ENCODE measurements at regions of chr2 and their contacts with region 1.

Region 1: GRCh38 chr2:64488050-64488974 is 34.4 kb downstream of the LGALSL start:
- DNase-seq: peak; percentile 84
- ATAC-seq: peak; percentile 87
- H3K4me3 Mint-ChIP-seq: no peak overlapping the region
- H3K27ac Mint-ChIP-seq: no peak overlapping the region
- H3K4me1 Mint-ChIP-seq: peaks cover 21% of the 10 kb centered on the region
- H3K27me3 Mint-ChIP-seq: peaks cover 30% of the 10 kb centered on the region

Region 2: GRCh38 chr2:64052468-64053241 is 435.7 kb before region 1 on chr2:
- CTCF ChIA-PET with region 1: interaction called, 34 read pairs
- DNase-seq: no peak
- ATAC-seq: no peak
- H3K4me3 Mint-ChIP-seq: no peak overlapping the region
- H3K27ac Mint-ChIP-seq: no peak overlapping the region
- H3K4me1 Mint-ChIP-seq: peaks cover 43% of the 10 kb centered on the region
- H3K27me3 Mint-ChIP-seq: peaks cover 3% of the 10 kb centered on the region

Region 3: DNA sequence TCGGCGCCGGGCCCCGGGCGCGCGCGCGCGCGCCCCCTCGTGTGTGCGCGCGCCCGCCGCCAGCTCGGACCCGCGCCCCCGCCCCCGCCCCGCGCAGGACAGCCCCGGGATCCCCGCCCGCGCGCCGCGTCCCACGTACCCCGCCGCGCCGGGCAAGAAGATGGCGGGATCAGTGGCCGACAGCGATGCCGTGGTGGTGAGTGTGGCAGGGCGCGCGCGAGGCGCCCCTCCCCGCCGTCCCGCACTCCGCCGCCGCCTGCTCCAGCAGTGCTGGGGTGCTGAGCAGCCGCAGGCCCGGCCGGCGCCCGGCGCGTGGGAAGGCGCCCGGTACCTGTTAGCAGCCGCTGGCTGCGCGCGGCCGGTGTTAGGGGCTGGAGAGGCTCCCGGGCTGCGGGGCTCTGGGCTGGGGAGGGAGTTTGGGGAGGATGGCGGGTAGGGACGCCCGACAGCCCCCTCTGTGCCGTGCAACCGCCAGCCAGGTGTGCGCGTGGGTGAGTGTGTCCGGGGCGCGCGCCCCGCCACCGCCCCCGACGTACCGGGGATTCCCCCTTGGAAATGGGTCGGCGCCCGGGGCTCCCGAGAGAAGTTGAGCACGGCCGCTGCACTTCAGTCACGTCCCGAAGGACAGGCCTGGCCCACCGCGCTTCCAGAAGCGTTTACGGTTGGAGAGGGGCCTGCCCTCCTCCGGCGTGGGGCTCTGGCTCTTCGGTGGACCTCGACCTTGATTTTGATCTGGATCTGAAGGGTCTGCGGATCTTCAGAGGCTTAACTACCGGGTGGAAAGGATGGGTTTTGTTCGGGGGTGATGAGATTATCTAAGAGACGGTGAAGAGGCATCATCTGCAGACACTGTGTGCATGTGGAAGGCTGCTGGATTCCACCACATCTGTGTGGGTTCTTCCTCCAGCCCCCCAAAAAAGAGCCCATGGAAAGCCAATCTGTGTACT is 33.7 kb before region 1 on chr2:
- CTCF ChIA-PET with region 1: interaction called, 15 read pairs
- DNase-seq: peak; percentile 46
- ATAC-seq: peak; percentile 74
- H3K4me3 Mint-ChIP-seq: peak overlapping the region; percentile 74
- H3K27ac Mint-ChIP-seq: no peak overlapping the region
- H3K4me1 Mint-ChIP-seq: peaks cover 11% of the 10 kb centered on the region
- H3K27me3 Mint-ChIP-seq: peaks cover 47% of the 10 kb centered on the region

Region 4: DNA sequence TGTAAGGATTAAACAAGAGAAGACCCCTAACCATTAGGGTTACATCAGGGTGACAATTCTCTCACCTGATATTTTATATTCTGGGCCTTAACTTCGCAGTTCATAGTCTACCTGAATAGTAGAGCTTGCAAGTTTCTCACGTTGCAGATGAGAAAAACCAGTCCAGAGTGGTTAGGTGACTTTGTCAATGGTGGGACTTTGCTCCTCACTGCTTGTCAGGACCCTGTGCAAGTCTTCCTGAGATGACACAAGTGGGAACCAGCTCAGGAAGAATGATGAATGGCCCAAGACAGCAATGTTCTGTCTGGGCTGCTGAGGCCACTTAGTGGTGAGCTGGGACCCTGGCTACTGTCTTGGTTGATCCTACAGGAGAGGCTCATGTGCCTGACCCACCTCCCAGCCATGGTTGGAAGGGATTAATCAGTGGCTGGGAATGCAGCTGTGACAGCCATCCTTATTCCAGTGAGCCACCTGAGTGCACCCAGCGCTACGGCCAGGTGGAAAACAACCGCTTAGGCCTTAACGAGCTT is 17.5 kb before region 1 on chr2:
- CTCF ChIA-PET with region 1: interaction called, 43 read pairs
- DNase-seq: no peak
- ATAC-seq: no peak
- H3K4me3 Mint-ChIP-seq: no peak overlapping the region
- H3K27ac Mint-ChIP-seq: no peak overlapping the region
- H3K4me1 Mint-ChIP-seq: peaks cover 3% of the 10 kb centered on the region
- H3K27me3 Mint-ChIP-seq: peaks cover 13% of the 10 kb centered on the region

Region 5: GRCh38 chr2:64501946-64502345 is 13.6 kb after region 1 on chr2:
- CTCF ChIA-PET with region 1: interaction called, 48 read pairs
- DNase-seq: no peak
- ATAC-seq: no peak
- H3K4me3 Mint-ChIP-seq: no peak overlapping the region
- H3K27ac Mint-ChIP-seq: no peak overlapping the region
- H3K4me1 Mint-ChIP-seq: peaks cover 27% of the 10 kb centered on the region
- H3K27me3 Mint-ChIP-seq: peaks cover 16% of the 10 kb centered on the region

Region 6: GRCh38 chr2:64562148-64562784 is 74.0 kb after region 1 on chr2:
- CTCF ChIA-PET with region 1: interaction called, 16 read pairs
- DNase-seq: no peak
- ATAC-seq: peak; percentile 69
- H3K4me3 Mint-ChIP-seq: no peak overlapping the region
- H3K27ac Mint-ChIP-seq: peak overlapping the region; percentile 42
- H3K4me1 Mint-ChIP-seq: peaks cover 36% of the 10 kb centered on the region
- H3K27me3 Mint-ChIP-seq: no peaks in the 10 kb centered on the region